ENCODE measurements at regions of chr1 and their contacts with region 1.

Region 1: DNA sequence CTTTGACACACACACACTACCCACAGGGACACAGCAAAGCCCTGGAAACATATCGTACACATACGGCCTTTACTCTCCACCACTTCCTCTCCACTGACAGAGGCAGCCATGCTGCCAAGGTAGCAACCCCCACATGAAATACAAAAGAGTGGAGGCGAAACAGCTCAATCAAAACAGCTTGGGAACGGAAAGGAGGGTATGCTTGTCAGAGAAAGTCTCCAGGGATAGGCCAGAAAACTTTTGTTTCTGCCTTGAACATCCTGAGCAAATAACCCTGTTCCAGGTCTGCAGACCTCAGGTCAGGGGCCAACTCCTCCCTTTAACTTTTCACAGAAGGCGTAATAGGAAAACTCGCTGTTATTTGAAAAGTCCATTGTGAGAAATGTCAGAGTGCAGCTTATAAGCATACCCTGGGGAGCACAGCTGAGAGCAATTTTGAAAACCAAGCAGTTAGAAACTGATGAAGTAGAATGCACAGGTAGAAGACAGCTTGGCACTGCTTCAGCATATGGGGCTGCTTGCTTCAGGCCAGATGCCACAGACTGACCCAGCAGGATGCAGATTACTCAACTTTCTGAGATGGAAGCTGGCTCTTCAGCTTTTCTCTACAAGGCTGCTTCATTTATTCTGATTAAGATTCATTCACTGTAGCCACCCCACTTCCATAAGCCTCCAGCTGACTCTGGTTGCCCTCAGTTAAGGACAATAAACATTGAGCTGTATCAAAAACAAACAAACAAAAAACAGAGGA is 18.0 kb downstream of the KIAA0319L start:
- DNase-seq: no peak
- H3K4me3 ChIP-seq: no peak overlapping the region
- H3K27me3 ChIP-seq: no peaks in the 10 kb centered on the region
- CTCF ChIP-seq: no peak

Region 2: GRCh38 chr1:35488336-35488735 is 50.9 kb before region 1 on chr1:
- CTCF ChIA-PET with region 1: no interaction called
- POLR2A ChIA-PET with region 1: no interaction called
- DNase-seq: no peak
- H3K4me3 ChIP-seq: no peak overlapping the region
- H3K27me3 ChIP-seq: no peaks in the 10 kb centered on the region
- CTCF ChIP-seq: no peak

Region 3: GRCh38 chr1:35505908-35506798 is 33.1 kb before region 1 on chr1:
- CTCF ChIA-PET with region 1: no interaction called
- POLR2A ChIA-PET with region 1: interaction called, 14 read pairs
- DNase-seq: peak; percentile 50
- H3K4me3 ChIP-seq: no peak overlapping the region
- H3K27me3 ChIP-seq: no peaks in the 10 kb centered on the region
- CTCF ChIP-seq: no peak

Measured in BJ (cell line).